Transverse colon (tissue), 4 donors: ENCODE measurements at regions of chr1 and their contacts with region 1.

Region 1: GRCh38 chr1:115976062-115976920 is at the start of gene SLC22A15:
- DNase-seq: peak; percentile 70
- H3K4me3 ChIP-seq: peak within 1 kb of the TSS; percentile 52 to 83 (median 60)
- H3K27ac ChIP-seq: peak within 1 kb of the TSS; percentile 74 to 86 (median 79)
- H3K4me1 ChIP-seq: peaks cover 0 to 10% (median 6%) of the 10 kb centered on the region in 4 donors
- H3K27me3 ChIP-seq: no peaks in the 10 kb centered on the region
- CTCF ChIP-seq: no peak
- EP300 ChIP-seq: no peak
- POLR2A ChIP-seq: no peak
- total RNA-seq, gene SLC22A15: 1.9 to 5.6 (median 3.4) TPM

Region 2: GRCh38 chr1:115624859-115625258 is 351.4 kb before region 1 on chr1:
- in situ Hi-C with region 1: loop called in 1 of 4 experiments (anchors 25 kb)
- intact Hi-C with region 1: no loop called
- DNase-seq: no peak
- H3K4me3 ChIP-seq: no peak overlapping the region
- H3K27ac ChIP-seq: no peak overlapping the region
- H3K4me1 ChIP-seq: no peaks in the 10 kb centered on the region
- H3K27me3 ChIP-seq: no peaks in the 10 kb centered on the region
- CTCF ChIP-seq: no peak
- EP300 ChIP-seq: no peak
- POLR2A ChIP-seq: no peak

Region 3: GRCh38 chr1:115807723-115808122 is 168.6 kb before region 1 on chr1:
- in situ Hi-C with region 1: loop called (anchors 5 to 10 kb)
- intact Hi-C with region 1: no loop called
- DNase-seq: peak; percentile 47
- H3K4me3 ChIP-seq: no peak overlapping the region
- H3K27ac ChIP-seq: no peak overlapping the region
- H3K4me1 ChIP-seq: peaks cover 0 to 17% (median 8%) of the 10 kb centered on the region in 4 donors
- H3K27me3 ChIP-seq: no peaks in the 10 kb centered on the region
- CTCF ChIP-seq: peak; percentile 55 to 72 (median 67)
- EP300 ChIP-seq: no peak
- POLR2A ChIP-seq: no peak